ENCODE measurements at regions of chr4 and their contacts with region 1.

Region 1: DNA sequence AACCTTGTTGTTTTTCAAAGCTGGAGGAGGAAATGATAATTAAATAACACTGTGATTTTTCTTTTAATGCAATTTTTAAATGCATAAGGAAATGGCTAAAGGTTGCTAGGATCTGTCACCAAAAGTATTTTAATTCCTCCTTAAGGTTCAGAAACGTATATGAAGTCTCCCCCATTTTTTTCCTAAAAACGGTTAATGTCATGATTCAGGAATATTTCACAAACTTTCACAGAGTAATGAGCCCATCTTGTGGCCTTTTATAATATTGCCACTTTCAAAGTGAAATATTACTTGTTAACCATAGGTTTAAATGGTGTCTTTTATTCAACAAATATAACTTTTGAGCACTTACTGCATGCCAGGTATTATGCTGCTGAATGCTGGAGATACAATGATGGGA is 99.5 kb upstream of the USP38 start:
- DNase-seq: peak; percentile 54
- ATAC-seq: no peak
- H3K4me3 ChIP-seq: no peak overlapping the region
- H3K27ac ChIP-seq: no peak overlapping the region
- H3K4me1 ChIP-seq: no peaks in the 10 kb centered on the region
- H3K27me3 ChIP-seq: peaks cover 34% of the 10 kb centered on the region
- CTCF ChIP-seq: peak; percentile 63

Region 2: GRCh38 chr4:141158219-141158618 is 1927.0 kb before region 1 on chr4:
- CTCF ChIA-PET with region 1: no interaction called
- POLR2A ChIA-PET with region 1: no interaction called
- intact Hi-C with region 1: loop called (anchors 10 kb)
- DNase-seq: peak; percentile 51
- ATAC-seq: no peak
- H3K4me3 ChIP-seq: no peak overlapping the region
- H3K27ac ChIP-seq: no peak overlapping the region
- H3K4me1 ChIP-seq: no peaks in the 10 kb centered on the region
- H3K27me3 ChIP-seq: no peaks in the 10 kb centered on the region
- CTCF ChIP-seq: peak; percentile 77

Region 3: GRCh38 chr4:142126890-142127497 is 958.2 kb before region 1 on chr4:
- CTCF ChIA-PET with region 1: no interaction called
- POLR2A ChIA-PET with region 1: no interaction called
- intact Hi-C with region 1: loop called (anchors 10 kb)
- DNase-seq: peak; percentile 87
- ATAC-seq: peak; percentile 68
- H3K4me3 ChIP-seq: no peak overlapping the region
- H3K27ac ChIP-seq: no peak overlapping the region
- H3K4me1 ChIP-seq: peaks cover 17% of the 10 kb centered on the region
- H3K27me3 ChIP-seq: no peaks in the 10 kb centered on the region
- CTCF ChIP-seq: peak; percentile 96

Region 4: GRCh38 chr4:142984871-142985585 is 100.2 kb before region 1 on chr4:
- CTCF ChIA-PET with region 1: interaction called, 20 read pairs
- POLR2A ChIA-PET with region 1: no interaction called
- intact Hi-C with region 1: loop called (anchors 1 kb)
- DNase-seq: peak; percentile 60
- ATAC-seq: peak; percentile 82
- H3K4me3 ChIP-seq: no peak overlapping the region
- H3K27ac ChIP-seq: no peak overlapping the region
- H3K4me1 ChIP-seq: no peaks in the 10 kb centered on the region
- H3K27me3 ChIP-seq: peaks cover 53% of the 10 kb centered on the region
- CTCF ChIP-seq: peak; percentile 83

Region 5: DNA sequence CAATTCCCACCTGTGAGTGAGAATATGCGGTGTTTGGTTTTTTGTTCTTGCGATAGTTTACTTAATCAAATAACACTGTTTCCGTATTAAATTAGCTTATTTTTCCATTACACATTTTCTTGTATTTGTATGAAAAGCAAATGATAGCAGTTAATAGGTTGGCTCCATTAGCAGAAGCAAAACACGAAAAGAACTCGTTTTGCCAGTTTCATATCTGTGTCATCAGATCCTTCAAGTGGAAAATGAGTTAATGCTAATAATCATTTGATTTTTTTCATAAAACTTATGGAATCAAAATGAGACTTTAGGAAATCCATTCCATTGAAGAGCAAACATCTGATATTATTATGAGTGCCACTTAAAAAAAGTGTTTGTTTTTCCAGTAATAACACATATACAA is 85.3 kb before region 1 on chr4:
- CTCF ChIA-PET with region 1: no interaction called
- POLR2A ChIA-PET with region 1: no interaction called
- intact Hi-C with region 1: no loop called
- DNase-seq: peak; percentile 26
- ATAC-seq: no peak
- H3K4me3 ChIP-seq: no peak overlapping the region
- H3K27ac ChIP-seq: no peak overlapping the region
- H3K4me1 ChIP-seq: no peaks in the 10 kb centered on the region
- H3K27me3 ChIP-seq: peaks cover 21% of the 10 kb centered on the region
- CTCF ChIP-seq: no peak

Region 6: DNA sequence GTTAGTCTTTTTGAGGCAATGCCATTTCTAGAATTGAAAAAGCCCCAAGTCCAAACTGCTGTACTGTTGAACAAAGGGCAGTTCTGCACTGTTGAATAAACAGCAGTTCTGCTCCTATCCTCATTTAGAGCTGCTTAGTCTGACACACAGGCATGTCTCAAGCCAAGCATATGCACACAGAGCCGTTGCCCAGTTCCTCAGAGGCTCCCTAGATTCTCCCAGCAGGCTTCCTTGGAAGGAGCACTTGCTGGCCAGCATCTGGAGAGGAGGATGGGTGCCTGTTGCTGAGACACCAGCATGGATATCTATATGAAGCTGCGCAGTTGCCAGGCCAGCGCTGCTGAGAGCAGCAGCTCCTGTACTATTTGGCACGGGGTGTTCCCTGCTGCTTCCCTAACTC is 38.8 kb before region 1 on chr4:
- CTCF ChIA-PET with region 1: no interaction called
- POLR2A ChIA-PET with region 1: no interaction called
- intact Hi-C with region 1: no loop called
- DNase-seq: no peak
- ATAC-seq: no peak
- H3K4me3 ChIP-seq: no peak overlapping the region
- H3K27ac ChIP-seq: no peak overlapping the region
- H3K4me1 ChIP-seq: no peaks in the 10 kb centered on the region
- H3K27me3 ChIP-seq: peaks cover 10% of the 10 kb centered on the region; the same call in 1 of the 2 replicates
- CTCF ChIP-seq: no peak

Region 7: GRCh38 chr4:143156853-143157252 is 71.6 kb after region 1 on chr4:
- CTCF ChIA-PET with region 1: no interaction called
- POLR2A ChIA-PET with region 1: no interaction called
- intact Hi-C with region 1: no loop called
- DNase-seq: no peak
- ATAC-seq: no peak
- H3K4me3 ChIP-seq: no peak overlapping the region
- H3K27ac ChIP-seq: no peak overlapping the region
- H3K4me1 ChIP-seq: no peaks in the 10 kb centered on the region
- H3K27me3 ChIP-seq: no peaks in the 10 kb centered on the region
- CTCF ChIP-seq: no peak

Region 8: DNA sequence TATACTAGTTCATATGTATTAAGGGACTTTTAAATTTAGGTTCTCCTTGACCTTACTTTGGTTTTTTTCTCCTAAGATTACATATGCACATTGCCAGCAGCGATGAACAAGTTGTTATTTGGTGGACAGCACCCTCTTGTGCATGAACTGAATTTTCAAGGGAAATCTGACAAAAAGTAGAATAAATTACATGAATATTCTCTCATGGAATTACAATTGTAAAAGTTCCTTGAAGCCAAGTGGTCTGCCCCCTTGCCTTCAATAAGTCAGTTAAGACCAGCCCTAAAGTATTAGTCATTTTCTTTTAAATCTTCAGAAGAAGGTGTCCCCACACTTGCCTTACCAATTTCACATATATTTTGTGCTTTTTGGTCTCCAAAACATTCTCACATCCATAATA is 397.6 kb after region 1 on chr4:
- CTCF ChIA-PET with region 1: no interaction called
- POLR2A ChIA-PET with region 1: no interaction called
- intact Hi-C with region 1: loop called (anchors 10 kb)
- DNase-seq: peak; percentile 74
- ATAC-seq: peak; percentile 49
- H3K4me3 ChIP-seq: no peak overlapping the region
- H3K27ac ChIP-seq: no peak overlapping the region
- H3K4me1 ChIP-seq: no peaks in the 10 kb centered on the region
- H3K27me3 ChIP-seq: no peaks in the 10 kb centered on the region
- CTCF ChIP-seq: peak; percentile 86